CD4-positive, alpha-beta memory T cell (primary cell): ENCODE measurements at regions of chr10 and their contacts with region 1.

Region 1: DNA sequence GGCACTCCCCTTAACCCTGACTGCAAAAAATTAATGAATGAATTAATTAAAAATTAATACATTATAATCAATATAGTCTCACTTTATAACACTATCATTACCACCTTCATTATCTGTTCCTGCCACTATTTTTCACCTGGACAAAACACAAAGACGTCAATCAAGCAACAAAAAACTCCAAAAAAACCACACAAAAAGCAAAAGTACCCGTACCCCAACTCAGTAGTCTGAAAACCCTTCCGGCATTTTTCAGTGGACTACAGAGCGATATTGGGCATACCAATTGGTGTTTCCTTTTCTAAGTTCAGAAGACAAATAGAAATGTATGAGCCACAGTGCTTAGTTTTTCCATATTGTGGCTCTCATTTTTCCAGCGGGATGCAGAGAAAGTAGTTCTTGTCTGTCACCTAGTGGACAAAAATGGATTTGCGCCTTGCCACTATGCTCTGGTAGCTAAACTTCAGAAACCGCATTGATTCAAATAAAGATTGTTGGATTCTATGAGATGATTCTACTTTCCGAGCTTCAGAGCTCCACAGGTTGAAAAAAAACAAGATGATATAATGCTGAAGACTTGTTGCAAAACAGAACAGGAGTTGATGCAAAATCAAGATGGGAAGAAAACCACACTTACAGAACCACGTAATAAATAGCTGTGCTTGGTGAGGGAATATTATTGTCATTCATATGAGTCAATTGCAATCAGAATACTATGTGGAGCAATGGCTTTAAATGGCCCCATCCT is 50.6 kb upstream of the ITGB1 start:
- DNase-seq: peak; percentile 65 to 79 (median 68)
- H3K4me3 ChIP-seq: peak overlapping the region; percentile 12 to 25
- H3K4me3 Mint-ChIP-seq: peak overlapping the region; percentile 63 to 90 (median 81)
- H3K27ac ChIP-seq: peak overlapping the region; percentile 57
- H3K27ac Mint-ChIP-seq: peak overlapping the region; percentile 92 to 99 (median 93)
- H3K4me1 ChIP-seq: peaks cover 55% of the 10 kb centered on the region
- H3K4me1 Mint-ChIP-seq: peaks cover 39 to 72% (median 54%) of the 10 kb centered on the region in 4 donors
- H3K27me3 ChIP-seq: no peaks in the 10 kb centered on the region
- H3K27me3 Mint-ChIP-seq: no peaks in the 10 kb centered on the region

Region 2: GRCh38 chr10:32256613-32257437 is 751.8 kb before region 1 on chr10:
- CTCF ChIA-PET with region 1: no interaction called
- POLR2A ChIA-PET with region 1: no interaction called
- intact Hi-C with region 1: loop called (anchors 10 kb)
- DNase-seq: peak; percentile 62 to 67 (median 66)
- H3K4me3 ChIP-seq: no peak overlapping the region
- H3K4me3 Mint-ChIP-seq: peak overlapping the region in 3 of 8 donors; percentile 5 to 44 (median 20)
- H3K27ac ChIP-seq: no peak overlapping the region
- H3K27ac Mint-ChIP-seq: peak overlapping the region in 1 of 7 donors; percentile 46
- H3K4me1 ChIP-seq: peaks cover 7% of the 10 kb centered on the region
- H3K4me1 Mint-ChIP-seq: peaks cover 5 to 10% (median 7%) of the 10 kb centered on the region in 4 donors
- H3K27me3 ChIP-seq: no peaks in the 10 kb centered on the region
- H3K27me3 Mint-ChIP-seq: no peaks in the 10 kb centered on the region

Region 3: DNA sequence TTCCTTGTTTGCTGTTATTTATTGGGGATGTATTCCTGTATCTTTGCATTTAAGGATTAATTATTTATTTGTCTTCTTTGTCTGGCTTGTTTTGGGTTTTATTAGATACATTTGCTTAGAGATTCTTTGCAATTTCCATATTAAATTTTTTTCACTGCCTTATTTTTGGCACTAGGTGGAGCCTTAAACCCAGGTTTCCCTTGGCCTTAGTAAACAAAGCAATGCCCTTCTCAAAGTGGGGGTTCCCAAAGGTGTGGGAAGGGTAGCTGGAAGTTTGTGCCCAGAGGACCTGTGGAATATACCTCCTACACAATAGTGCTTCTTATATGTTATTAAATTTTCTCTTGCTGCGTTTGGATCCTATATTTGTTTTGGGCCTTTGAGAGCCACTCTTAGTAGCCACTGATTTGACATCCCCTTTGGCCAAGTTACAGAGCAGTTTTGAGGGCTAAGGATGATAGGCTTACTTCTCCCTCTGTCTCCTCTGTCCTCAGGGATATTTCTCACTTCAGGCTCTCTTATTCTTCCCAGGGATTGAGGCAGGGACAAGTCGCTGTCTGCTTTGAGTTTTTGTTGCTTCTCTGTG is 213.0 kb before region 1 on chr10:
- CTCF ChIA-PET with region 1: interaction called, 13 read pairs
- POLR2A ChIA-PET with region 1: no interaction called
- intact Hi-C with region 1: loop called (anchors 1 kb)
- DNase-seq: peak in 4 of 5 donors; percentile 34 to 46 (median 35)
- H3K4me3 ChIP-seq: no peak overlapping the region
- H3K4me3 Mint-ChIP-seq: no peak overlapping the region
- H3K27ac ChIP-seq: no peak overlapping the region
- H3K27ac Mint-ChIP-seq: peak overlapping the region in 4 of 7 donors; percentile 1 to 47 (median 22)
- H3K4me1 ChIP-seq: no peaks in the 10 kb centered on the region
- H3K4me1 Mint-ChIP-seq: peaks cover 0 to 5% (median 2%) of the 10 kb centered on the region in 4 donors
- H3K27me3 ChIP-seq: no peaks in the 10 kb centered on the region
- H3K27me3 Mint-ChIP-seq: no peaks in the 10 kb centered on the region

Region 4: DNA sequence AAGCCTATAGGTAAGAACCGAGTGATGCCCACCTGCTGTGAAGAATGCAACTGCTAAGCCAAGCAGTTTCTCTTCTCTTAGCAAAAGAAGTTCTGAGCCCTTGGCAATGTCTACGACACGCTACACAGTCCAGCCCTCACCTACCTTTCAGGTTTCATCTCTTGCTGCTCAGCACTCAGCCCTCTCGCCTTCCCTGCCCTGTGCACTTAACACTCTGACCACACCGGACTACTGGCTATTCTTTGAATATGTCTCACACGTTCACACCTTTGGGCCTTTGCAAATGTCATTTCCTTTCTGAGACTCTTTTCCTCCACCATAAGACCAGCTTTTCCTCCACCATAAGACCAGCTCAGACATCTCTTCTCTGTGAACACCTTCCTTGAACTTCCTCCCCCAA is 16.4 kb after region 1 on chr10:
- CTCF ChIA-PET with region 1: interaction called, 75 read pairs
- POLR2A ChIA-PET with region 1: interaction called, 23 read pairs
- intact Hi-C with region 1: loop called (anchors 1 kb)
- DNase-seq: no peak
- H3K4me3 ChIP-seq: no peak overlapping the region
- H3K4me3 Mint-ChIP-seq: peak overlapping the region in 4 of 8 donors; percentile 3 to 67 (median 10)
- H3K27ac ChIP-seq: no peak overlapping the region
- H3K27ac Mint-ChIP-seq: peak overlapping the region in 6 of 7 donors; percentile 13 to 85 (median 65)
- H3K4me1 ChIP-seq: peaks cover 63% of the 10 kb centered on the region
- H3K4me1 Mint-ChIP-seq: peaks cover 47 to 73% (median 55%) of the 10 kb centered on the region in 4 donors
- H3K27me3 ChIP-seq: no peaks in the 10 kb centered on the region
- H3K27me3 Mint-ChIP-seq: no peaks in the 10 kb centered on the region

Region 5: DNA sequence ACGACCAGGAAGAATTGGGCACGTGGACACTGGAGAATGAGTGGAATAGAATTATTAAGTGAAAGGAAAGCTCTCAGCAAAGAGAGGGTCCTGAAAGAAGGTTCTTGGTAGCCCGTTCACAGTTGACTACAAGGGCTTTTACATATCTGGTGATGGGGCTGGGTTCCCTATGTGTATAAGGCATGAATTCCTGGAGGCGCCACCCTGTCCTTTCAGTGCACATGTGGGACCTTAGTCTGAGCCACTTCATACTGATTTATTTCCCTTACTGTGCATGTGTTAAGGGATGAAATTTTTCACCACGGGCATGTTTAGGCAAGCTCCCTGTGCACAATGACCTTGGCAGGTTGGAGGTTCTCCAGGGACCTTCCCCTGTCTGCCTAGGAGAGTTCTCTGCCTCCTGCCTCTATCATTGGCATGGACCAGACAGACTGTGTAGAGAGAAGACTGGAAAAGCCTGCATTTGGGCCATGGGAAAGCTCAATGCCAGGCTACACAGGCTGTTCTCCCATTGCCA is 95.2 kb after region 1 on chr10:
- CTCF ChIA-PET with region 1: interaction called, 27 read pairs
- POLR2A ChIA-PET with region 1: interaction called, 39 read pairs
- intact Hi-C with region 1: no loop called
- DNase-seq: no peak
- H3K4me3 ChIP-seq: no peak overlapping the region
- H3K4me3 Mint-ChIP-seq: peak overlapping the region in 3 of 8 donors; percentile 44 to 48 (median 45)
- H3K27ac ChIP-seq: no peak overlapping the region
- H3K27ac Mint-ChIP-seq: peak overlapping the region in 6 of 7 donors; percentile 73 to 89 (median 84)
- H3K4me1 ChIP-seq: peaks cover 98% of the 10 kb centered on the region
- H3K4me1 Mint-ChIP-seq: peaks cover 59 to 98% (median 80%) of the 10 kb centered on the region in 4 donors
- H3K27me3 ChIP-seq: no peaks in the 10 kb centered on the region
- H3K27me3 Mint-ChIP-seq: no peaks in the 10 kb centered on the region

Region 6: DNA sequence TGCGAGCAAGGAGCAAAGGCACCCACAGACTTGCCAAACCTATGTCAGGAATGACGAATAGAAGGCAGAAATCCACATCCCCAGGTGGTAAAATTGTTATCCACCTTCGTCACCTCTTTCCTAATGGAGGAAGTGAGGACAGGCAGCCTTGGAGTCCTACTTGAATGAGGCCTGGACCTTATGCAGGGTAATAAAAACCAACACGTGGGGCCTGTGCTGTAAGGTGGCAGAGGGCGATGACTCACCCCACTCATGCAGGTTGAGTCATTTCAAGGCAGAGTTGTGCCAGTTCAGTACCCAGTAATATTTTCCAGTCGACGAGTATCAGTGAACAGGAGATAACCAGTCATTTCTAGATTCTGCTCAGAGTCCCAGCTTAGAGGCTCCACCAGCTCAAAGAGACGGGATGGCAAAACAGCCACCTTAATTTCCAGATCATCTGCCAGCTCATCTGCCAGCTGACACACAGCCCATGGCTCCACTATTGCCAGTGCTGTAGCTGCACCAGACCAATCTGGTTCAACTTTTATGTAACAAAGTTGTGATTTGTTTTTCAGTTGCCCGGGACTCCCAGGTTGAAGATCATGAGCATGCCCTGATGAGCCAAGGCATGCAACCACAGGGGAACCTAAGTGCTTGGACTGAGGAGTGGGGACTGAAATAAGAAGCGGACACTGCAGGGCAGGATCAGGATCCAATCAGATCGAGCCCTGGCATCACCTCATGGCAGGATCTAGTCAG is 125.5 kb after region 1 on chr10:
- CTCF ChIA-PET with region 1: interaction called, 61 read pairs
- POLR2A ChIA-PET with region 1: interaction called, 61 read pairs
- intact Hi-C with region 1: loop called (anchors 1 kb)
- DNase-seq: peak; percentile 59 to 96 (median 73)
- H3K4me3 ChIP-seq: no peak overlapping the region
- H3K4me3 Mint-ChIP-seq: peak overlapping the region; percentile 13 to 84 (median 62)
- H3K27ac ChIP-seq: peak overlapping the region; percentile 84
- H3K27ac Mint-ChIP-seq: peak overlapping the region; percentile 89 to 100 (median 100)
- H3K4me1 ChIP-seq: peaks cover 98% of the 10 kb centered on the region
- H3K4me1 Mint-ChIP-seq: peaks cover 71 to 97% (median 85%) of the 10 kb centered on the region in 4 donors
- H3K27me3 ChIP-seq: no peaks in the 10 kb centered on the region
- H3K27me3 Mint-ChIP-seq: no peaks in the 10 kb centered on the region